B cell (primary cell): ENCODE measurements at regions of chr9 and their contacts with region 1.

Region 1: DNA sequence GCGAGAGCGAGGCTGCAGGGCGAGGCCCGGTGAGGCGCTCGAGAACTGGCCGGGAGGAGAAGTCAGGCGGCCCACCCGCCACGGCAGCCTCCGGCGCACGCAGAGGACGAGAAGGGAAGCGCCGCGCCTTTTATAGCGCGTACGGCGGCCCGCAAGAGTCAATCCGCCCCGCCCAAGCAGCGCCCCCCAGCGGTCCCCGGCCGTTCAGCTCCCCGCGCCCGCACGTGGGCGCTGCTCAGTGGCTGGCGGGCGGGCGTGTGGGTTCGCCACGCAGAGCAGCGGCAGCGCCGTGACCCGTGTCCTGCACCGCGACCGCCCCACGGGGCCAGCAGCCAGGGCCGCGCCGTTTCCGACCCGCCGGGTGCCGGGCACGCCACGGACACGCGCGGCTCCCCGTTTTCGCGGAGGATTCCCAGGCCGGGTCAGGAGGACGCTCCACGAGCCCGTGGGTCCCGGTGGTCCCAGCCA is 14.6 kb downstream of the LCN10 start:
- DNase-seq: peak; percentile 96
- ATAC-seq: peak; percentile 79
- H3K4me3 ChIP-seq: peak overlapping the region in 4 of 5 experiments; percentile 90 to 99 (median 98)
- H3K4me3 Mint-ChIP-seq: peak overlapping the region; percentile 96
- H3K27ac ChIP-seq: peak overlapping the region; percentile 34 to 79
- H3K27ac Mint-ChIP-seq: peak overlapping the region; percentile 87
- H3K4me1 ChIP-seq: peaks cover 22 to 35% of the 10 kb centered on the region in 2 donors
- H3K4me1 Mint-ChIP-seq: peaks cover 49% of the 10 kb centered on the region
- H3K27me3 ChIP-seq: no peaks in the 10 kb centered on the region
- H3K27me3 Mint-ChIP-seq: no peaks in the 10 kb centered on the region
- CTCF ChIP-seq: peak; percentile 84

Region 2: DNA sequence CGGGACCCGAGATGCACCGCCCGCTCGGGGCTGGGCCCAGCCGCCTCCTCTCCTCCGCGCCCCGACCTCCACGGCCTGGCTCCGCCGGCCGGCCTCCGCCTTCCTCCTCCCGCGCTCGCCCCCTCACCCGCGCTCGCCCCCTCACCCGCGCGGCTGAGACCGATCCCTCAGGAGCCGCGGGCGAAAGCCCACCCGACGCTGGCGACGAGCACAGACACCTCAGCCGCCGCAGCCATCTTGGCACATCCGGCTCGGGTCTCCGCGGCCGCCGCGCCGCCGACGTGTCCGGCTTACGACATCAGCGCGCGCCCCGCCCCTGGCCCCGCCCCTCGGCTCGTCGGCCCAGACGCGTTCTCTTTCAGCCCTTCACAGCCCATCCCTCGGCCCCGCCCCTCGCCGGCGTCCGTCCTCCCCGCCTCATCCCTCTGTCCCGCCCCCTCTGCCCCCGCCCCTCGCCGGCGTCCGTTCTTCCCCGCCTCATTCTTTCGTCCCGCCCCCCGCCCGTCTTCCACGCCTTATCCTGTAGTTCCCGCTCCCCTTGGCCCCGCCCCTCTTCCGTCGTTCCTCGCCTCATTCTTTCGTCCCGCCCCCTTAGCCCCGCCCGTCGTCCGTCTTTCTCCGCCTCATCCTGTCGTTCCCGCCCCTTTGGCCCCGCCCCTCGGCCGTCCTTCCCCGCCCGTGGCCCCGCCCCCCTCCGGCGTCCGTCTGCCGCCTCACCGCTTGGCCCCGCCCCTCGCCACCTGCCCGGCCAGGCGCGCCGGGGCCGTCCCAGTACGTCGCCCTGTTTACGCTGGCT is 245.1 kb before region 1 on chr9 and contains the start of gene SEC16A:
- CTCF ChIA-PET with region 1: no interaction called
- POLR2A ChIA-PET with region 1: no interaction called
- intact Hi-C with region 1: no loop called
- DNase-seq: peak; percentile 99
- ATAC-seq: peak; percentile 75
- H3K4me3 ChIP-seq: peak within 1 kb of the TSS; percentile 63 to 96 (median 83)
- H3K4me3 Mint-ChIP-seq: peak within 1 kb of the TSS; percentile 97
- H3K27ac ChIP-seq: peak within 1 kb of the TSS; percentile 98 to 99
- H3K27ac Mint-ChIP-seq: peak within 1 kb of the TSS; percentile 99
- H3K4me1 ChIP-seq: peaks cover 25 to 26% of the 10 kb centered on the region in 2 donors
- H3K4me1 Mint-ChIP-seq: peaks cover 34% of the 10 kb centered on the region
- H3K27me3 ChIP-seq: peaks cover 0 to 4% (median 2%) of the 10 kb centered on the region in 4 experiments
- H3K27me3 Mint-ChIP-seq: no peaks in the 10 kb centered on the region
- CTCF ChIP-seq: no peak
- total RNA-seq, gene SEC16A: 73.4 and 79.5 TPM in 2 replicates

Region 3: DNA sequence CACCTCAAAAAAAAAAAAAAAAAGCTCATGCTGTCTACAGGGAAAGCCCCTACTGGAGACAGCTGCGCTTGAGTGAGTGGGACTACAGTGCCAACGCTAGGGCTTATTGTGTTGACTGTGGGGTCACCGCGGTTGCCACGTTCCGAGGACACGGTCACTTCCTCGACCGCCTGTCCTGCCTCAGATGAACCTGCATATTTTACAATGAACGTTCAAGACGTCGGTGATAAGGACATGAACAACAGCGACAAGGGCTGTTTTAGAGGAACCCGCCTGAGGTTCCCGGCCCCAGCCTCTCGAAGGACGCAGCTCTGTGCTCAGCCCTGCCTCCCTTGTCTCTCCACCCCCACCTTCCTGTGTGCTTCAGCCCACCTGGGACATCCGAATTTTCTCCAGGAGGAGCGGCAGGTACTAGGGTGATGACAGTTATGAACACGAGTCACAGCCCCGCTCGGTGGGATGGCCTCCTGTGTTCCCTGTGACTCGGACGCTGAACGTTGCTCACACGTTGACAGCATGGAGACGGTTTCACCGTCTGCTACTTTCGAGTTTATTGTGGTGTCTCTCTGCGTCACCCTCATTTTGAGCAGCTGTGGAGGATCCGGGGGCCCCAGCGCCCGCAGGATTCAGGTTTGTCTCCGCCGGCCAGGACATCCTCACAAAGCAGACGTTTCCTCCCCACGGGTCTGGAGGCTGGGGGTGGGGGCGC is 27.0 kb before region 1 on chr9:
- CTCF ChIA-PET with region 1: interaction called, 7 read pairs
- POLR2A ChIA-PET with region 1: interaction called, 20 read pairs
- intact Hi-C with region 1: no loop called
- DNase-seq: peak; percentile 87
- ATAC-seq: peak; percentile 81
- H3K4me3 ChIP-seq: peak overlapping the region in 4 of 5 experiments; percentile 9 to 52 (median 27)
- H3K4me3 Mint-ChIP-seq: peak overlapping the region; percentile 87
- H3K27ac ChIP-seq: peak overlapping the region; percentile 3 to 79
- H3K27ac Mint-ChIP-seq: peak overlapping the region; percentile 90
- H3K4me1 ChIP-seq: peaks cover 31 to 48% of the 10 kb centered on the region in 2 donors
- H3K4me1 Mint-ChIP-seq: peaks cover 37% of the 10 kb centered on the region
- H3K27me3 ChIP-seq: peaks cover 0 to 21% (median 3%) of the 10 kb centered on the region in 4 experiments
- H3K27me3 Mint-ChIP-seq: peaks cover 14% of the 10 kb centered on the region
- CTCF ChIP-seq: no peak

Region 4: GRCh38 chr9:136742591-136743391 is 14.7 kb after region 1 on chr9 and contains the start of gene LCN10:
- CTCF ChIA-PET with region 1: interaction called, 47 read pairs
- POLR2A ChIA-PET with region 1: interaction called, 60 read pairs
- intact Hi-C with region 1: no loop called
- DNase-seq: no peak
- ATAC-seq: peak; percentile 5
- H3K4me3 ChIP-seq: peak within 1 kb of the TSS; percentile 31 to 97 (median 77)
- H3K4me3 Mint-ChIP-seq: peak within 1 kb of the TSS; percentile 91
- H3K27ac ChIP-seq: peak within 1 kb of the TSS; percentile 82 to 83
- H3K27ac Mint-ChIP-seq: peak within 1 kb of the TSS; percentile 94
- H3K4me1 ChIP-seq: peaks cover 26 to 55% of the 10 kb centered on the region in 2 donors
- H3K4me1 Mint-ChIP-seq: peaks cover 47% of the 10 kb centered on the region
- H3K27me3 ChIP-seq: no peaks in the 10 kb centered on the region
- H3K27me3 Mint-ChIP-seq: no peaks in the 10 kb centered on the region
- CTCF ChIP-seq: no peak
- total RNA-seq, gene LCN10: 70.7 and 76.3 TPM in 2 replicates

Region 5: GRCh38 chr9:136757328-136757727 is 29.2 kb after region 1 on chr9:
- CTCF ChIA-PET with region 1: interaction called, 102 read pairs
- POLR2A ChIA-PET with region 1: interaction called, 83 read pairs
- intact Hi-C with region 1: loop called (anchors 1 kb)
- DNase-seq: no peak
- ATAC-seq: peak; percentile 54
- H3K4me3 ChIP-seq: no peak overlapping the region
- H3K4me3 Mint-ChIP-seq: peak overlapping the region; percentile 81
- H3K27ac ChIP-seq: peak overlapping the region; percentile 50 to 80
- H3K27ac Mint-ChIP-seq: peak overlapping the region; percentile 95
- H3K4me1 ChIP-seq: peaks cover 61 to 79% of the 10 kb centered on the region in 2 donors
- H3K4me1 Mint-ChIP-seq: peaks cover 56% of the 10 kb centered on the region
- H3K27me3 ChIP-seq: no peaks in the 10 kb centered on the region
- H3K27me3 Mint-ChIP-seq: no peaks in the 10 kb centered on the region
- CTCF ChIP-seq: no peak

Region 6: DNA sequence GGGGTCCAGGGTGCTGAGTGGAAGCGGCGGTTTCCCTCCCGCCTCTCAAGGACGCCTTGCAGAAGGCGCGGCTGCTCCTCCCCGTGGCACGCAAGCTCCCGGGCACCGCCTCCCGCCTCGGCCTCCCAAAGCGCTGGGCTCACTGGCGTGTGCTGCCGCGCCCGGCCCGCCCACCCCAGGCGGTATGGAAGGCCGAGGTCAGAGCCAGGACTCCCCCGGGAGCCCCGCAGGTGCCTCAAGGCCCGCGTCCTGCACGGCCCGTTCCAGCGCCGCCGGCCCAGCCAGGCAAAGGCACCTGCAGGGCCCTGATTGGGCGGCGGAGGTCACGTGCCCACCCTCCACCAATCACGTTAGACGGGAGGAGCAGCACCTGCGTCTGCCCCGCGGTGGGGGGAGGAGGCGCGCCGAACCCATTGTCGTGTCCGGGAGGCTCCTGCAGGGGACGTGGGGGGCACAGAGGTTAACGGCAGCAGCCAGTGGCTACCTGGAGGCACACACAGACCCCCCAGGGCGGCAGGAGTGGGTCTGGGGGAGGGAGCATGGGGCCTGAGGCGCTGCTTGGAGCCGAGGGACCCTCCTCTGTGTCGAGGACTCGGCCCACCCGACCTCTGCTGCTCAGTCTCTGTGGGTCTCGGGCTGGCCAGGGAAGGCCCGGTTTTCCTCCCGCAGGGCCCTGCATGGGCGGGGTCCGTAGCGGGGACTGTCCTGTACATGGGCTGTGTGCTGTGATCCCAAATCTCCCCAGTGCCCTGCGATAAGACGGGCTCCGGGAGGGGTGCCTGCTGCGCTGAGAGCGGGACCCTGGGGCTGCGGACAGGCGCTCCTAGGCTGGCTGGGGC is 221.9 kb after region 1 on chr9:
- CTCF ChIA-PET with region 1: no interaction called
- POLR2A ChIA-PET with region 1: no interaction called
- intact Hi-C with region 1: no loop called
- DNase-seq: peak; percentile 97
- ATAC-seq: peak; percentile 95
- H3K4me3 ChIP-seq: peak overlapping the region; percentile 44 to 65 (median 58)
- H3K4me3 Mint-ChIP-seq: peak overlapping the region; percentile 88
- H3K27ac ChIP-seq: peak overlapping the region; percentile 41 to 72
- H3K27ac Mint-ChIP-seq: peak overlapping the region; percentile 92
- H3K4me1 ChIP-seq: peaks cover 10 to 15% of the 10 kb centered on the region in 2 donors
- H3K4me1 Mint-ChIP-seq: peaks cover 8% of the 10 kb centered on the region
- H3K27me3 ChIP-seq: no peaks in the 10 kb centered on the region
- H3K27me3 Mint-ChIP-seq: no peaks in the 10 kb centered on the region
- CTCF ChIP-seq: peak; percentile 36